Psoas muscle (tissue), 8 donors: ENCODE measurements at regions of chr1 and their contacts with region 1.

Region 1: DNA sequence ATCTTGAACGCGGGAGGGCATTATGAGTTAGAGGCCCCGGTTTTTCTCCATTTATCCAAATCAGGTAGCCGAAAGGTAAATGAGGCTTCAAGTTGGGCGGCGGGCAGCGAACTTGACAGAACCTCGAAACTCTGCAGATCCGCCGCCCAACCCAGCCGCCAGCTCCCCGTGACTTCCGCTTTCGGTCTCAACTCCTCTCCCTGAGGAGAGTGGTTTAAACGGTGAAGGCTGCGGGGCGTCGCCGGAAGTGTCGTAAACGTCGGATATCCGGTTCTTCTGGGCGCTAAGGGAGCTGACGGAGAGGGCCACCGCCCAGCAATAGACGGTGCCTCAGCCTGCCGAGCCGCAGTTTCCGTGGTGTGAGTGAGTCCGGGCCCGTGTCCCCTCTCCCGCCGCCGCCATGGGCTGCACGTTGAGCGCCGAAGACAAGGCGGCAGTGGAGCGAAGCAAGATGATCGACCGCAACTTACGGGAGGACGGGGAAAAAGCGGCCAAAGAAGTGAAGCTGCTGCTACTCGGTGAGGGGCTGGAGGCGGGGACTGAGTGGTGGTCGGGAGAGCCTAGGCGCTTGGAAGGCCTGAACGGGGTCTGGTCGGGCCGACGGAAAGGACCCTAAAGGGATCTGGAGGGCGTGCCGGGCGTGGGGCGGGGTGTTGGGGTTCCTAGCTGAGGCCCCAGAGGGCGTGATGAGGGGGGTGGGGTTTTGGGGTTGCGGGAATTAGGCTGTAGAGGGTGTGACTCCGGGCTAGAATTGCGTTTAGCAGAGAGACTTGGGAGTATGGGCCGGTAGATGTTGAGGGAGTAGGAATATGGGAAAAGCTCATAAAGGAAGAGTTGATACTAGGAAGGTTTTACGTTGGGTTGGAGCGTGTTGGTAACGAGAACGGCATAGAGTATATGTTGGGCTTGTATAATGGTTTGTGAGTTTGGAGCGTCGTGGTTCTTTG is at the start of gene GNAI3:
- DNase-seq: peak; percentile 96 to 98
- ATAC-seq: peak; percentile 97 to 98 (median 98)
- H3K4me3 ChIP-seq: peak within 1 kb of the TSS; percentile 90
- H3K27ac ChIP-seq: peak within 1 kb of the TSS; percentile 95
- H3K4me1 ChIP-seq: peaks cover 30% of the 10 kb centered on the region
- H3K27me3 ChIP-seq: no peaks in the 10 kb centered on the region
- CTCF ChIP-seq: no peak
- total RNA-seq, gene GNAI3: 1.4 to 2.3 (median 1.7) TPM

Region 2: DNA sequence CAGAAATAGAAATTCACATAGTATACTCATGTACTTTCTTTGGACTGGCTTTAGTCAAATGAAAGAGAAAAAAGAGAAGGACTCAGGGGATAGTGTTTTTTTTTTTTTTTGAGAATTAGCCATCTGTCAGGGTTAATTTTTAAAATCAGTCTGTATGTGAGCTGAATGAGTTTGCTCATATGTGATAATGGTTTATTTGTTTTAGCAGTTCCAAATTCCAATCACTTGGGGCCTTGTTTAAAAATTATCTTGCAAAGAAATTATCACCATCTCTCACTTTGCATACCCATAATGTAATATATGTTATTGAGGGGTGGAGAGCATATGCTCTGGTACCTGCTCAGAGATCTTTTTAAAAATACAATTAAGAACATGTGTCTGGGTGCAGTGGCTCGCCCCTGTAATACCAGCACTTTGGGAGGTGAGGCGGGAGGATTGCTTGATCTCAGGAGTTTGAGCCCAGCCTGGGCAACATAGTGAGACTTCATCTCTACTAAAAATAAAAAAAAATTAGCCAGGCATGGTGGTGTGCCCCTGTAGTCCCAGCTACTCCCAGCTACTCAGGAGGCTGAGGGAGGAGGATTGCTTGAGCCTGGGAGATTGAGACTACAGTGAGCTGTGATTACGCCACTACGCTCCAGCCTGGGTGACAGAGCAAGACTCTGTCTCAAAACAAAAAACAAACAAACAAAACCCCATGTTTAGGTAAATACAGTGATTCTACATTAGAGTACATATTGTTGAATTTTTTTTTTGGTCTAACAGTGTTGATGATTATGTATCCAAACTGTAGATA is 19.5 kb after region 1 on chr1:
- intact Hi-C with region 1: loop called in 1 of 2 experiments (anchors 2 kb)
- DNase-seq: no peak
- ATAC-seq: no peak
- H3K4me3 ChIP-seq: no peak overlapping the region
- H3K27ac ChIP-seq: no peak overlapping the region
- H3K4me1 ChIP-seq: peaks cover 40% of the 10 kb centered on the region
- H3K27me3 ChIP-seq: no peaks in the 10 kb centered on the region
- CTCF ChIP-seq: no peak

Region 3: DNA sequence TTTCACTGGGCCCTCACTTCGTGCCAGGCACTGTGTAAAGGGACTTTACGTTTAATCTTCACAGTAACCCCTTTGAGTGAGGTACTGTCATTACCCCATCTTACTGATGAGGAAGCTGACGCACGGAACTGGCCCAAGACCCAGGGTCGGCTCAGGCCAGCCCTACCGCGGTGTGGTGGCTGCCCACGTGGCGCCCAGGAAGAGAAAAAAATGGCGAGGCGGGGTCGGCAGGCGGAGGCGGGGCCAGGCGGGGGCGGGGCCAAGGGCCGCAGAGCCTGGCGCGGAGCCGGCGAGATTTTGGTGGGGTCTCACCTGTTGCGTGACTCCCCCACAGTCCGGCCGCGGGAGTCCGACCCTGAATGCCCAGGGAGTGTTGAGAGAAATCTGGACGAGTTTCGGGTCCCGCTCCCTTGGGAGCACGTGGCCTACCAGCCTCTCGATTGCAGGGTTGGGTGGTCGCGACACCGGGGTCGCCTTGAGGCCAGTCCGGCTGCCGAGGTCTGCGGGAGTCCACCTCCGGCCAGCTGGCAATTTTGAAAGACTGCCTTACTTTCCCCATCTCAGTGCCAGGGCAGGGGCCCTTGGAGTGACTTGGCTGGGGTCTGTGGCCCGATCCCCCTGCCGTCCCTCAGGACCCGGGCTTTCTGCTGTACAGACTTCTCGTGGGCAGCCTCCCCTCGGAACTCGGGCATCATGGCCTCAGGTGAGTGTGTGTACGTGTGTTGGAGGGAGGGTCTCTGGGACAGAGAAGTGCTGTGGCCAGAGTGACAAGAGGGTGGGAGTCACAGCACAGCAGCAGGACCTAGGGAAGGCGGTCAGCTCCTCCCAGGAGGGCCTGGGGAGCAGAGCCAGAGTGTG is 71.2 kb after region 1 on chr1 and contains the starts of genes AMPD2 and GNAT2:
- intact Hi-C with region 1: loop called (anchors 5 kb)
- DNase-seq: peak; percentile 86 to 93
- ATAC-seq: peak; percentile 84 to 91 (median 88)
- H3K4me3 ChIP-seq: peak within 1 kb of the TSS; percentile 78
- H3K27ac ChIP-seq: peak within 1 kb of the TSS; percentile 70
- H3K4me1 ChIP-seq: peaks cover 11% of the 10 kb centered on the region
- H3K27me3 ChIP-seq: peaks cover 0 to 4% (median 1%) of the 10 kb centered on the region in 3 donors
- CTCF ChIP-seq: no peak
- total RNA-seq, gene AMPD2: 7.3 to 13.1 (median 8.7) TPM
- total RNA-seq, gene GNAT2: not detected

Region 4: DNA sequence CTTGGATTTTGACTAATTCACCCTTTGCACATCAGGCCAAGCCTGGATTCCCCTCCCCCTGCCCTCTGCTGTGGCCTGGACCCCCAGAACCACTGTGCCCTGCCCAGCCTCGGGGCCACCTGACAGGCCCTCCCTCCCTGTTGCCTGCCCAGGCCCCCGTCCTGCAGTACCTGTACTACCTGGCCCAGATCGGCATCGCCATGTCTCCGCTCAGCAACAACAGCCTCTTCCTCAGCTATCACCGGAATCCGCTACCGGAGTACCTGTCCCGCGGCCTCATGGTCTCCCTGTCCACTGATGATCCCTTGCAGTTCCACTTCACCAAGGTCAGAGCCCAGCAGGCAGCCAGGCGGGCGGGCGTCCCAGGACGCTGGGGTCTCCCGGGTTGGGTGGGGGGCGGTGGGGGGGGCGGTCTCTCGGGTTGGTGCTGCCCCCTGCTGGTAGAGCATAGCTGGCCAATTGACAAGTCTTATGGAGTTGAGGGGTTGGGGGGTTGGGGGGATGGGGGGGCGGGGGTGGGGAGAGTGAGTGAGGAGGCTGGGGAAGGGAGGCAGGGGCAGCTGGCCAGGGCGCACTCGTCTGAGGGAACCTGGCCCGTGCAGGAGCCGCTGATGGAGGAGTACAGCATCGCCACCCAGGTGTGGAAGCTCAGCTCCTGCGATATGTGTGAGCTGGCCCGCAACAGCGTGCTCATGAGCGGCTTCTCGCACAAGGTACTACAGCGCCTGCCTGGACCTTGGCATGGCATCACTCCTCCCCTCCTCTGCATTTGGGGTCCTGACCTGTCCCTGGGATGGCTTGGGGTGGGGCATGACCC is 81.7 kb after region 1 on chr1:
- intact Hi-C with region 1: loop called in 1 of 2 experiments (anchors 5 kb)
- DNase-seq: no peak
- ATAC-seq: peak in 1 of 4 donors; percentile 38
- H3K4me3 ChIP-seq: no peak overlapping the region
- H3K27ac ChIP-seq: no peak overlapping the region
- H3K4me1 ChIP-seq: no peaks in the 10 kb centered on the region
- H3K27me3 ChIP-seq: no peaks in the 10 kb centered on the region
- CTCF ChIP-seq: no peak

Region 5: GRCh38 chr1:109643385-109644230 is 95.0 kb after region 1 on chr1:
- intact Hi-C with region 1: loop called in 1 of 2 experiments (anchors 5 kb)
- DNase-seq: peak; percentile 85 to 93
- ATAC-seq: peak; percentile 93 to 97 (median 94)
- H3K4me3 ChIP-seq: peak overlapping the region; percentile 26
- H3K27ac ChIP-seq: no peak overlapping the region
- H3K4me1 ChIP-seq: no peaks in the 10 kb centered on the region
- H3K27me3 ChIP-seq: no peaks in the 10 kb centered on the region
- CTCF ChIP-seq: peak; percentile 93